PC-3 (cell line): ENCODE measurements at regions of chr21 and their contacts with region 1.

Region 1: DNA sequence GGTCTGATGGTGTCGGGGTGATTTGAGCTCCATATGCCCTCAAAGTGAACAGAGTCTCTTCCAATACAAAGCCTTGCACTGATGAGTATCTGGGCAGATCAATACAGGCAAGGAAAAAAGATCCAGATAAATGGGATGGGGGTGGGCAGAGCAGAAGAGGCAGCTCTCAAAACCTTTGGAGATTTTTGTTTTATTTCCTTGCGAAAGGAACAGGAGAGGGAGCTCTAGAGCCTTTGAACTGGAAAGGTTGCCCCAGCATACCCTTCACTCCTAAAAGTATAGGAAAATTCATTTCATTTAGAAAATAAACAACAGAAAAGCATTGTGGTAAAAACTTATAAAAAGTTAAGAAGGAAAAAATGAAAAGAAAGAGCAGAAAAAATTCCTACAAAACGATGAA is 31.4 kb upstream of the OLIG2 start:
- DNase-seq: peak; percentile 65
- ATAC-seq: peak; percentile 77
- H3K4me3 ChIP-seq: no peak overlapping the region
- H3K27ac ChIP-seq: no peak overlapping the region
- H3K4me1 ChIP-seq: no peaks in the 10 kb centered on the region
- H3K27me3 ChIP-seq: peaks cover 53% of the 10 kb centered on the region
- CTCF ChIP-seq: peak; percentile 76

Region 2: GRCh38 chr21:33015756-33016155 is 21.5 kb after region 1 on chr21:
- CTCF ChIA-PET with region 1: no interaction called
- POLR2A ChIA-PET with region 1: no interaction called
- intact Hi-C with region 1: loop called (anchors 2 kb)
- DNase-seq: no peak
- ATAC-seq: no peak
- H3K4me3 ChIP-seq: no peak overlapping the region
- H3K27ac ChIP-seq: no peak overlapping the region
- H3K4me1 ChIP-seq: peaks cover 10% of the 10 kb centered on the region
- H3K27me3 ChIP-seq: peaks cover 28% of the 10 kb centered on the region
- CTCF ChIP-seq: no peak

Region 3: GRCh38 chr21:33099131-33099530 is 104.8 kb after region 1 on chr21:
- CTCF ChIA-PET with region 1: no interaction called
- POLR2A ChIA-PET with region 1: no interaction called
- intact Hi-C with region 1: no loop called
- DNase-seq: no peak
- ATAC-seq: no peak
- H3K4me3 ChIP-seq: no peak overlapping the region
- H3K27ac ChIP-seq: no peak overlapping the region
- H3K4me1 ChIP-seq: no peaks in the 10 kb centered on the region
- H3K27me3 ChIP-seq: peaks cover 89% of the 10 kb centered on the region
- CTCF ChIP-seq: no peak